ENCODE measurements at regions of chr17 and their contacts with region 1.

Region 1: DNA sequence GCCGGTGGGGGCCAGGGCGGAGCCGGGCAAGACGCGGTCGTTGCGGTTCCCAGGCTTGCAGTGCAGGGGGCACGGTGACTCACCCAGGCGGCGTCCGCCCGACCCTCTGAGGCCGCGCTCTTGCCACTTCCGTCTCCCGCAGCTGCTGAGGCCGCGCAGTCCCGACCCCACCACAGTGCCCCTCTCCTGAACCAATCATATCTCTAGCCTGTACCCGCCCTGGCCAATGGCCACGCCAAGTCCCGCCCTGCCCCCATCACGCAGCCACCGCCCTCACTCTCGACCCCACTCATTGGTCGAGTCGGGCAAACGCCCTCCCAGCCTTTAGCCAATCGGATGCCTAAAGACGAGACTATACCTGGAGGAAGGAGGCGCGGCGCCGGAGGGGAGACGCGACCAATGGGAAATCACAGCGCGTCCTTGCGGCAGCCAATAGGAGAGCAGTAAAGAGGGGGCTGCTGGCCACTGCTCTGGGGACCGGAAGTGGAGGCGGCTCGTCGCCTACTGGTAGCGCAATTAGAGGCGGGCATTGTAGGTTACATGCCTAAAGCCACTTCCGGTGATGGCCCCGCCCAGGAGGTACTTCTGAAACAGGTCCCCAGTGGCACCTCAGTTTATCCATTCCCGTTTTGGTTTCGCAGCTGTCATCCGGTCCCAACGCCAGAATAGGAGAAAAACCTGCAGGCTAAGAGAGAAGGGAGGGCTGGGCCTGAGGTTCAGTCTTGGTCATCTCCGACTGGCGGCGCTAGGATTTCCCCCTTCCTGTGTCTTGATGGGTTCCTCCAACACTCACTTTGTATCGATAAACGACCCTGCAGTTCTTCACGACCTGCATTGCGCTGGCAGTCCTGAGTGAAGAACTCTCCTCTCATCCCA is 3.5 kb upstream of the MTMR4 start:
- DNase-seq: peak; percentile 100
- ATAC-seq: peak; percentile 73
- H3K4me3 ChIP-seq: peak overlapping the region; percentile 83
- H3K27ac ChIP-seq: peak overlapping the region; percentile 63
- H3K4me1 ChIP-seq: peaks cover 24% of the 10 kb centered on the region
- H3K27me3 ChIP-seq: no peaks in the 10 kb centered on the region
- CTCF ChIP-seq: no peak

Region 2: GRCh38 chr17:58432806-58433572 is 85.0 kb before region 1 on chr17:
- CTCF ChIA-PET with region 1: no interaction called
- POLR2A ChIA-PET with region 1: no interaction called
- intact Hi-C with region 1: no loop called
- DNase-seq: peak; percentile 28
- ATAC-seq: peak; percentile 60; the same call in 1 of the 2 replicates
- H3K4me3 ChIP-seq: no peak overlapping the region
- H3K27ac ChIP-seq: no peak overlapping the region
- H3K4me1 ChIP-seq: no peaks in the 10 kb centered on the region
- H3K27me3 ChIP-seq: peaks cover 27% of the 10 kb centered on the region
- CTCF ChIP-seq: peak; percentile 58

Region 3: DNA sequence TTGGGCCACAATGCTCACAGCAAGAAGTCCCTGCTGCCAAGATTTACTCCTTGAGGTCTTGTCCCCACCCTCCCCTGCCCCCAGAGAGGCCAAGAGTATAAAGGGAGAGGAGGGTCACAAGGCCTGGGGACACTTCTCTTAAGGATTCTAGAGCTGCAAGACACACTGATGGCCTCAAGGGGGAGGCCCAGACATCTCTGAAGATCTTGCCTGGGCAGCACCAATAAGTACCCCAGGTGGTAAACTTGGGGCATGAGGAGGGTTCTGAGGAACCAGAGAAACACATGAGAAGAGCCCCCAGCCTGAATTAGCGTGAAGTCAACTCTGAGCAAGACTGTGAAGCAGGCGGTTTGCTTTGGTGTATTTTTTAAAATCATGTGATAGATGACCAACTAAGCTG is 23.3 kb after region 1 on chr17:
- CTCF ChIA-PET with region 1: interaction called, 3 read pairs
- POLR2A ChIA-PET with region 1: interaction called, 16 read pairs
- intact Hi-C with region 1: no loop called
- DNase-seq: peak; percentile 40
- ATAC-seq: peak; percentile 70
- H3K4me3 ChIP-seq: no peak overlapping the region
- H3K27ac ChIP-seq: no peak overlapping the region
- H3K4me1 ChIP-seq: no peaks in the 10 kb centered on the region
- H3K27me3 ChIP-seq: peaks cover 22% of the 10 kb centered on the region
- CTCF ChIP-seq: peak; percentile 56

Region 4: GRCh38 chr17:58631523-58632323 is 113.8 kb after region 1 on chr17:
- CTCF ChIA-PET with region 1: interaction called, 6 read pairs
- POLR2A ChIA-PET with region 1: interaction called, 33 read pairs
- intact Hi-C with region 1: loop called (anchors 1 kb)
- DNase-seq: peak; percentile 100
- ATAC-seq: peak; percentile 95
- H3K4me3 ChIP-seq: peak overlapping the region; percentile 64
- H3K27ac ChIP-seq: peak overlapping the region; percentile 78
- H3K4me1 ChIP-seq: peaks cover 13% of the 10 kb centered on the region
- H3K27me3 ChIP-seq: no peaks in the 10 kb centered on the region
- CTCF ChIP-seq: peak; percentile 30; the same call in 1 of the 2 replicates

Region 5: DNA sequence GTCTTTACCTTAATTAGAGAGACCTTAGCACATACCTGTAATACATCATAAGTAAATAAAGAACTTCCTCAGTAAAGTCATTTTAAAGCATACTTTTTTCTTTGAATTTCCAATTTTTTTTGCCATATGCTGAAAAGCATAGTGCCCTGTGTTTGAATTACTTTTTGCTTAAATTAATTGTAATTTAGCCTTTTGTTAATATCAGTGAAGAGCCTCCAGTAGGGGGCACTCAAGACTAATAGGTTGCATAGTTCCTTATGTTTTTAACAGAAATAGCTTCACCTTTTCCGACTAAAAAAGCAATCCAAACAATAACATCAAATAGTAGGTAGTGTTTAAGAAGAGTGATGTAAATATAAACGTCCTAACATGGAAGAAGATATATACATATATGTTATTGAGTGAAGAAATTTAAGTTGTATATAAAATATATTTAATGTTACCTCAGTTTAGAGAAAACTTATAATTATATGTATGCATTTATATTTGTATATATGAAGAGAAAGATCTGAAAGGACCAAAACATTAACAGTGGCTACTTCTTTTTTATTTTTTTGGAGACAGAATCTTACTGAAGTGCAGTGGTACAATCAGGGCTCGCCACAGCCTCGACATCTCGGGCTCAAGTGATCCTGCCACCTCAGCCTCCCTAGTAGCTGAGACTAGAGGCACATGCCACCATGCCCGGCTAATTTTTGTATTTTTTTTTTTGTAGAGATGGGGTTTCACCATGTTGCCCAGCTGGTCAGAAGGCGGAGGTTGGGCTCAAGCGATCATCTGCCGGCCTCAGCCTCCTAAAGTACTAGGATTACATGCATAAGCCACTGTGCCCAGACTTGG is 193.2 kb after region 1 on chr17:
- CTCF ChIA-PET with region 1: interaction called, 4 read pairs
- POLR2A ChIA-PET with region 1: no interaction called
- intact Hi-C with region 1: loop called (anchors 5 kb)
- DNase-seq: peak; percentile 85
- ATAC-seq: peak; percentile 58
- H3K4me3 ChIP-seq: no peak overlapping the region
- H3K27ac ChIP-seq: no peak overlapping the region
- H3K4me1 ChIP-seq: no peaks in the 10 kb centered on the region
- H3K27me3 ChIP-seq: no peaks in the 10 kb centered on the region
- CTCF ChIP-seq: peak; percentile 96

Region 6: GRCh38 chr17:59106463-59107305 is 588.7 kb after region 1 on chr17 and contains the start of gene TRIM37:
- CTCF ChIA-PET with region 1: no interaction called
- POLR2A ChIA-PET with region 1: no interaction called
- intact Hi-C with region 1: loop called (anchors 2 kb)
- DNase-seq: peak; percentile 100
- ATAC-seq: peak; percentile 96
- H3K4me3 ChIP-seq: peak within 1 kb of the TSS; percentile 87
- H3K27ac ChIP-seq: peak within 1 kb of the TSS; percentile 84
- H3K4me1 ChIP-seq: peaks cover 24% of the 10 kb centered on the region
- H3K27me3 ChIP-seq: no peaks in the 10 kb centered on the region
- CTCF ChIP-seq: peak; percentile 31
- total RNA-seq, gene TRIM37: 35.1 and 42.0 TPM in 2 replicates

Measured in PC-3 (cell line).